Head of caudate nucleus (tissue), 42 donors: ENCODE measurements at regions of chr1 and their contacts with region 1.

Region 1: GRCh38 chr1:109397538-109398342 is at the start of gene SORT1:
- DNase-seq: peak; percentile 89 to 99 (median 97)

Region 2: DNA sequence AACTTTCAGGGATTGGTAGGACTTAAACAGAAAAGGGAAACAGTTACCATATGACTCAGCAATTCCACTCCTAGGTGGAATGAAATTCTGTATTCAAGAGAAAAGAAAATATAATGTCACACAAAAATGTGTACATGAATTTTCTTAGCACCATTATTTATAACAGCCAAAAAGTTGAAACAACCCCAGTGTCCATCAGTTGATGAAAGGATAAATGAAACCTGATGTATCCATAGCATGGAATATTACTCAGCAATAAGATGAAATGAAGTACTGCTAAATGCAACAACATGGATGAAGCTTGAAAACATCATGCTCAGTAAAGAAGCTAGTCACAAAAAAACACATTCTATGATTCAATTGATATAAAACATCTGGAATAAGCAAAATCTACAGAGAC is 822.4 kb before region 1 on chr1:
- intact Hi-C with region 1: no loop called
- DNase-seq: no peak

Region 3: DNA sequence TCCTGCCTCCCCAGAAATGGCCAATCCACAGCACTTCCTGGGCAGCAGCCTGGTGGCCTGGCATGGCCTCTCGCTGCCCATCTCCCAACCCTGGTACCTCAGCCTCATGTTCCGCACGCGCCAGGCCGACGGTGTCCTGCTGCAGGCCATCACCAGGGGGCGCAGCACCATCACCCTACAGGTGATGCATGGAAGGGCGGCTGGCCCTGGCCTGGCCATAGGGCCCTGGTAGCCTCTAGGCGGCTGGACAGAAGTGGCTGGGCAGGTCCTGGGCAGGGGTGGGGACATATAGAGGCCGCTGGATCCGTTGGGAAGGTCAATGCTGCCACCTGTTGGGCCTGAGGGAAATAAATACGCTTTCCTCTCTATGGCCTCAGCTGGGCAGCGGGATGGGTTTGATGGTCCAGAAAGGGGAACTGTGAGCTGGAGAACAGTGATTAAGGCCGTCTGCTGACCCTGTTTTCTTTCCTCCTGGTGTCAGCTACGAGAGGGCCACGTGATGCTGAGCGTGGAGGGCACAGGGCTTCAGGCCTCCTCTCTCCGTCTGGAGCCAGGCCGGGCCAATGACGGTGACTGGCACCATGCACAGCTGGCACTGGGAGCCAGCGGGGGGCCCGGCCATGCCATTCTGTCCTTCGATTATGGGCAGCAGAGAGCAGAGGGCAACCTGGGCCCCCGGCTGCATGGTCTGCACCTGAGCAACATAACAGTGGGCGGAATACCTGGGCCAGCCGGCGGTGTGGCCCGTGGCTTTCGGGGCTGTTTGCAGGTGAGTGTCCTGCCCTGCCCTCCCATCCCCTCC is 133.9 kb before region 1 on chr1:
- intact Hi-C with region 1: loop called (anchors 10 kb)
- DNase-seq: peak; percentile 63 to 94 (median 84)

Region 4: GRCh38 chr1:109282952-109283747 is 114.6 kb before region 1 on chr1 and contains the start of gene PSRC1:
- intact Hi-C with region 1: loop called (anchors 5 kb)
- DNase-seq: peak; percentile 97 to 100 (median 99)

Region 5: DNA sequence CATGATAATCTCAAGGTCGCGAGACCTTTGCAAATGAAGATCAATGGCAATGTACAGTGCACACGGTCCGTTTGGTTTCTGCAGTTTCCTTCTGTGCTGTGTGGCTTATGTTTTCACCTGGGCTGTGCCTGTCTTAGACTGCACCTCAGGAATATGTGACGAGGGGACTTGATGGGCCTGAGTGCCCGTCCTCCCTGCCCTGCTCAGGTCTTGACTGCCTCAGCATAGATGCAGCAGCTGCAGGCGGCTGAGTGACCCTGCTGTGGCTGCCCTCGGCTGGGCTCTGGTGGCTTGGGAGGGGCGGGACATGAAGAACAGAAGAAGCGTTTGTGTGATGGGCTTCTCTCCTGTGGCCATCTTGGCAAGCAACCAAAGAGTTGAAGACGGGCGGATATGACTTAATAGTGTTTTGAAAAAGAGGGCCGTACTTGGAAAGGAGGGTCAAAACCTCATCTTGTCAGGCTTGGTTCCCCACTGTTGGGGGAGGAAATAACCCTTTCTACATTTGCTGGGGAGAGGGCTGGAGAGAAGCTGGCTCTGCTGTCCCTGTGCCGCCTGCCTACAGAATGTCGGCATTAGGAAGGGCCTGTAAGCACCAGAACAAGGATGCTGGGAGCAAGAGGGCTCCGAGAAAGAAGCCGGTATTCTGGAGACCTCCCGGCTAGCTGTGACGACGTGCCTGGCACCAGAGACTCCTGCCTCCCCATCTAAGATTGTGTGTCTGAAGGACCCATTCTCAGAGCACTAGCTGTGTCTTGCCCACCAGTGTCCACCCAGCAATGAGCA is 98.0 kb before region 1 on chr1:
- intact Hi-C with region 1: loop called (anchors 5 kb)
- DNase-seq: peak; percentile 76 to 97 (median 92)

Region 6: GRCh38 chr1:109357616-109358015 is 40.1 kb before region 1 on chr1:
- intact Hi-C with region 1: loop called (anchors 5 kb)
- DNase-seq: no peak

Region 7: DNA sequence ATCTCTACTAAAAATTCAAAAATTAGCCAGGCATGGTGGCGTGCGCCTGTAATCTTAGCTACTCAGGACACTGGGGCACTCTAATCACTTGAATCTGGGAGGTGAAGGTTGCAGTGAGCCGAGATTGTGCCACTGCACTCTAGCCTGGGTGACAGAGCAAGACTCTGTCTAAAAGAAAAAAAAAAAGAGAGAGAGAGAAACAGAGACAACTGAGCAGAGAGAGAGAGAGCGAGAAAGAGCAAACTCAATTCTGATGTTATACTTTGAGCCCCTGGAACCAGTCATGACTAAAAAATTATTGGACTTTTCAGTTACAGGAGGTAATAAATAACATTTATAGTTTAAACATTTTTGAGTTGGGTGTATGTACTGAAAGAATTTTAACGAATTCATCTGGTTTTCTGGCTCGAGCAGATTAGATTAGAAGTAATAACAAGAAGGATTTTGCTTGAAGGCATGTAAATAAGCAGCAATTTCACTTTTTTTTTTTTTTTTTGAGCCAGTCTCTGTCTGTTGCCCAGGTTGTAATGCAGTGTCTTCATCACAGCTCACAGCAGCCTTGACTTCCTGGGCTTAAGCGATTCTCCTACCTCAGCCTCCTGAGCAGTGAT is 48.5 kb after region 1 on chr1:
- intact Hi-C with region 1: no loop called
- DNase-seq: no peak

Region 8: GRCh38 chr1:109499661-109500536 is 102.2 kb after region 1 on chr1:
- intact Hi-C with region 1: no loop called
- DNase-seq: peak in 36 of 42 donors; percentile 17 to 86 (median 52)